Activated CD4-positive, alpha-beta memory T cell treated with anti-CD3 and anti-CD28 coated beads for 36 hours (primary cell): ENCODE measurements at regions of chr18 and their contacts with region 1.

Region 1: DNA sequence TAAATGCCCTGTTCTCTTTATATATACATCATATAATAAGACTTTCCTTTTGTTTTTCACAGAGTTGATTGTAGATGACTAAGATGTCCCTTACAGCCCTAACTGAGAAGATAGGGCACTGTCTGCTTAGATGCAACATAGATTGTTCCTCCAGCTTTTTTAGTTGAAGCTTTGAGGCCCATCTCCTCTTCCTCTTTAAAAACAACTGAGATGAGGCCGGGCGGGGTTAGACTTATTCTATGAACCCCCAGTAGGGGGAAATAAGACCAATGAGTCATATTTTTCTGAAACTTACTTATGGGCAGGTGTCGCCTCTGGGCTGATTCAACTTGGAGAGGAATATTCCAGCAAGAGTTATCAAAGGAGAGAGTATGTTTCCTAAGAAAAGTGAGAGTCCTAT is 84.6 kb downstream of the FBXO15 start:
- DNase-seq: peak; percentile 43
- H3K4me3 Mint-ChIP-seq: no peak overlapping the region
- H3K27ac Mint-ChIP-seq: peak overlapping the region; percentile 38
- H3K4me1 Mint-ChIP-seq: peaks cover 25% of the 10 kb centered on the region
- H3K27me3 Mint-ChIP-seq: peaks cover 5% of the 10 kb centered on the region

Region 2: GRCh38 chr18:74040459-74041332 is 22.3 kb before region 1 on chr18:
- CTCF ChIA-PET with region 1: interaction called, 6 read pairs
- POLR2A ChIA-PET with region 1: no interaction called
- intact Hi-C with region 1: loop called (anchors 2 kb)
- DNase-seq: peak; percentile 78
- H3K4me3 Mint-ChIP-seq: no peak overlapping the region
- H3K27ac Mint-ChIP-seq: no peak overlapping the region
- H3K4me1 Mint-ChIP-seq: no peaks in the 10 kb centered on the region
- H3K27me3 Mint-ChIP-seq: peaks cover 3% of the 10 kb centered on the region

Region 3: DNA sequence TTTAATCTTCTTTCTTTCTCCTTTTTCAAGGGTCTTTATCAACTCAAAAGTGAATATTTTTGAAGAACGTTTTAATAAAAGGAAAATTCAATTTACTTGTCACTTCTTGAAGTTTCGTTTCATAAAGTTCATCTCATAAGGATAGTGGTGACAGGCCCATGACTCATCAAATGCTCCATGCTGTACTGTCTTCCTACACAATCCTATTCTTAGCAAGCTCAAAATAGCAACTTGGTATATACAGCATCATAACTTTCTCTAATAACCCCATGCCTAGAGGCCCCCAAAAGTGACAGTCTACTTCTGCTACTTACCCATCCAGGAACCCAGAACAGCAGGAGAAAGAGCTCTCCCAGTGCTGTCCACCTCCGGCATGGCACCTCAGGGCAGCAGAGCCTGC is 76.9 kb after region 1 on chr18:
- CTCF ChIA-PET with region 1: interaction called, 3 read pairs
- POLR2A ChIA-PET with region 1: no interaction called
- intact Hi-C with region 1: loop called (anchors 1 kb)
- DNase-seq: peak; percentile 58
- H3K4me3 Mint-ChIP-seq: peak overlapping the region; percentile 4
- H3K27ac Mint-ChIP-seq: peak overlapping the region; percentile 73
- H3K4me1 Mint-ChIP-seq: peaks cover 32% of the 10 kb centered on the region
- H3K27me3 Mint-ChIP-seq: peaks cover 12% of the 10 kb centered on the region

Region 4: DNA sequence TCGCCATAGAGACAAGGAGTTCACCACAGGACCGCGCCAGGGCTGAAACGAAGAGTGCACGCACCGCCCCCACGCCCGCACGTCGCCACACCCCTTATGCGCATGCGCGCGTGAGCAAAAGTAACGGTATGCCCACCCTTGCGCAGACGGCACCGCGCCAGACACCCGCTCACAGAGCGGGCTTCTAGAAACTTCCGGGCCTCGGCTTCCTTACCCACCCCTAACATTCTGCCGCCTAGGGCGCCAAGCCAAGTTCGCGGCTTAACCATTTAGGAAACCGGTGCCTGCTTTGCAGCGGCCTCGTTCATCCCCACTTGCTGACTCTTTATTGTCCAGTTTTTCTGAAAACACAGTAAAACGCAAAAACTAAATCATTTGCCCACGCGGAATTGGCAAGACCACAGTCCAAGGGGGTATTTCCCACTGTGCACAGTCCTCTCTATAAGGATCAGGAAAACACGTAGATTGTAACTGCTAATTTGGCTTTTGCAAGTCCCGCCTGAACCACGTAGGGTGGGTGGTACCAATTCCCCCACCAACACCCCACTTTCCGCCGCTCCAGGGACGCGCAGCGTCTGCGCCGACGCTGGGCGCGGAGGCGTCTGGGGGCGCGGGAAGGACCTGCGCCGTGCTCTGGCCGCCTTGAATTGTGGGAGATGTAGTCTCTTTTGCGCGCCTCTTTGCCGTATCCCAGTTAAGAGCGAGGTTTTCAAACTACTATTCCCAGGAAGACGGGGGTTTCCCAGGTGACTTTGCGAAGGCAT is 84.9 kb after region 1 on chr18 and contains the starts of genes FBXO15 and TIMM21:
- CTCF ChIA-PET with region 1: no interaction called
- POLR2A ChIA-PET with region 1: no interaction called
- intact Hi-C with region 1: loop called (anchors 2 kb)
- DNase-seq: peak; percentile 97
- H3K4me3 Mint-ChIP-seq: peak within 1 kb of the TSS; percentile 95
- H3K27ac Mint-ChIP-seq: peak within 1 kb of the TSS; percentile 99
- H3K4me1 Mint-ChIP-seq: peaks cover 40% of the 10 kb centered on the region
- H3K27me3 Mint-ChIP-seq: peaks cover 2% of the 10 kb centered on the region
- total RNA-seq, gene FBXO15: 0.67 to 0.75 TPM
- total RNA-seq, gene TIMM21: 37.1 to 38.3 TPM